Activated T-helper 1 cell treated with anti-CD3 and anti-CD28 coated beads, Interleukin-12 subunit alpha, Interleukin-12 subunit beta, Interleukin-2, Interleukin-4 antibody, amounts not matched to agents 30 ng/mL and 10 ng/mL and 1 ng/mL, durations not matched to agents 14 hours and 24 hours and 36 hours (primary cell): ENCODE measurements at regions of chr5 and their contacts with region 1.

Region 1: DNA sequence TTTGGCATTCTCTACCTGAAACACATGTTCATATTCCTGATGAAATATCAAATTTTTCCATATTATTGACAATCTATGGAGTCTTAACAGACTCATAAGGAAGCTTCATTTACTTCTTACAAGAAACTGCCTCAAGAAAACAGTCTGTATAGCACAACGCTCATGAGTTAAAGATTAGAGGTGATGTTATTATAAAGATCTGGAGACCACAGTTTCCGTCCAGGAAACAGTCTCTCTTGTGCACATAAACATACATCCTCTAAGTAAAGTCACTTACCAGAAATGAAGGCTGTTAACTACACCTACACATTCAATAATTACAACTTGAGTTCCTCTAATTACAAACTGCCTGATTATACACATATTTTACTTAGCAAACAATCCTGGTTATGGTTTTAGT is 86.9 kb downstream of the RAPGEF6 start:
- DNase-seq: peak; percentile 34
- H3K4me3 Mint-ChIP-seq: peak overlapping the region; percentile 94
- H3K27ac Mint-ChIP-seq: peak overlapping the region; percentile 92
- H3K4me1 Mint-ChIP-seq: peaks cover 68% of the 10 kb centered on the region
- H3K27me3 Mint-ChIP-seq: no peaks in the 10 kb centered on the region

Region 2: GRCh38 chr5:131514316-131515283 is 33.6 kb before region 1 on chr5:
- intact Hi-C with region 1: loop called (anchors 2 kb)
- DNase-seq: no peak
- H3K4me3 Mint-ChIP-seq: peak overlapping the region; percentile 83
- H3K27ac Mint-ChIP-seq: peak overlapping the region; percentile 80
- H3K4me1 Mint-ChIP-seq: peaks cover 38% of the 10 kb centered on the region
- H3K27me3 Mint-ChIP-seq: no peaks in the 10 kb centered on the region

Region 3: DNA sequence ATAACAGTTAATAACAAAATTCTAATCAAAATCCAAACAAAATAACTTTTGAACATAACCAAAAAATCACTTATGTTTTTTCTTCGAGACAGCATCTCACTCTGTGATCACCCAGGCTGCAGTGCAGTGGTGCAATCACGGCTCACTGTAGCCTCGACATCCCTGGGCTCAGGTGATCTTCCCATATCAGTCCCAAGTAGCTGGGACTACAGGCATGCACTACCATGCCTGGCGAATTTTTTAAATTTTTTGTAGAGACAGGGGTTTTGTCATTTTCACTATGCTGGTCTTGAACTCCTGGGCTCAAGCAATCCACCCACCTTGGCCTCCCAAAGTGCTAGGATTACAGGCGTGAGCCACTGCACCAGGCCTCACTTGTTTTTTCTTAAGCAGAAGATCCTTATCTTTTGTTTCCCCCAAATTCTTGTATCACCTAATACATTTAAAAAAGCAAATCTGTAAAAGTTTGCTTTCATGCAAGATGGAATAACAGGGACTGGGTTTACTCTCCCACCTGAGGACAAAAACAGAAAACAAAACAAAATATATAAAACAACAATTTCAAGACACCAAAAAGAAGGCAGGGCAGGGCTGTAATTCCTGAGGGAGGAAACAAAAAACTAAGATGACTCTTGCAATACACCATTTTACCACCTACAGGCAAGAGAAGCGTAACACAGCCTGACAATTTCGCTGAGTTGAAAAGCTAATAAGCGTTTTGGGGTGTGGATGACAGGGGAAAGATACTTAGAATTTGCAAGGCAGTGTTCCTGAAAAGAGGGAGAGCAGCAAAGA is 15.5 kb after region 1 on chr5:
- intact Hi-C with region 1: loop called (anchors 2 kb)
- DNase-seq: no peak
- H3K4me3 Mint-ChIP-seq: no peak overlapping the region
- H3K27ac Mint-ChIP-seq: no peak overlapping the region
- H3K4me1 Mint-ChIP-seq: peaks cover 34% of the 10 kb centered on the region
- H3K27me3 Mint-ChIP-seq: no peaks in the 10 kb centered on the region

Region 4: GRCh38 chr5:131610198-131611063 is 62.3 kb after region 1 on chr5:
- intact Hi-C with region 1: no loop called
- DNase-seq: no peak
- H3K4me3 Mint-ChIP-seq: no peak overlapping the region
- H3K27ac Mint-ChIP-seq: no peak overlapping the region
- H3K4me1 Mint-ChIP-seq: peaks cover 16% of the 10 kb centered on the region
- H3K27me3 Mint-ChIP-seq: no peaks in the 10 kb centered on the region